ENCODE measurements at regions of chr12 and their contacts with region 1.

Region 1: DNA sequence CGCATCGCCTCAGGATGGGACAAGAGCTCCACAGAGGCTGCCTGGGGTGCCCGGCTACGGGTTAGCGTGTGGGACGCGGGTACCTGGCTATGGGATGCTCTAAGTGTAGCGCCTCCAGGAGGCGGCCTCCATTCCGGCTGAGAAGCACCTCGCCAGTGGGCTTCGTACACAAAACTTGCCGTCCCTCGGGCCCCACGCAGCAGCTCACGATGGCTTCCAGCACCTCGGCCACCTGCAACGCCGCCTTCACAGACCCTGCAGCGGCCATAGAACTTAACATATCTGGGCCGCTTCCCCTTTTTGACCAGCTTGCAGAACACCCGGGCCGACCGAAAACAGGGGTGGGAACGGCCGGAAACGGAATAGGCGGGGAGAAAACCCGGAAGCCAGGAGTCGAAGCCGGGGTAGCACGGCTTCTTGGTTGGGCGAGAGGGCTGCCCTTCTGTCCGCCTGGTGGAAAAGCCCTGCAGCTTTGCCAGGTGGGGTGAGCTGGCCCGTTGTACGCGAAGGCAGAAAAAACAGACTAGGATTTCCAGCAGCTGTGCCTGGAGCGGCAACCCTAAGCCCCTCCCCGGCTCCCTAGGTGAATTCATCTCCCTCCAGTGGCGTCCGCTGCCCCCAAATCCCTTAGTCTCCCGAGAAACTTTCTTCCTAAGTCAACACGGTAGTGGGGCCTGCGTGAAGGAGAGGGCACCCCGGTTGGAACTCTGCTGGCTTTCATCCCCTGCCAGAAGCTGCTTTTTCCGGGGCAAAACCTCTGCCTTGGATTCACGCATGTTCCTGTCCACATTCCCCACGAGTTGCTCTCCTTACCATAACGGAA is at the start of gene BBS10:
- DNase-seq: peak; percentile 81
- ATAC-seq: peak; percentile 95
- H3K4me3 Mint-ChIP-seq: peak within 1 kb of the TSS; percentile 93
- H3K27ac Mint-ChIP-seq: peak within 1 kb of the TSS; percentile 87
- H3K4me1 Mint-ChIP-seq: peaks cover 14% of the 10 kb centered on the region
- H3K27me3 Mint-ChIP-seq: no peaks in the 10 kb centered on the region
- total RNA-seq, gene BBS10: 5.8 to 7.1 TPM

Region 2: GRCh38 chr12:76083904-76084862 is 264.1 kb before region 1 on chr12 and contains the start of gene NAP1L1:
- POLR2A ChIA-PET with region 1: interaction called, 13 read pairs
- DNase-seq: peak; percentile 95
- ATAC-seq: peak; percentile 85
- H3K4me3 Mint-ChIP-seq: peak within 1 kb of the TSS; percentile 99
- H3K27ac Mint-ChIP-seq: peak within 1 kb of the TSS; percentile 99
- H3K4me1 Mint-ChIP-seq: peaks cover 35% of the 10 kb centered on the region
- H3K27me3 Mint-ChIP-seq: no peaks in the 10 kb centered on the region
- total RNA-seq, gene NAP1L1: 534 to 576 TPM

Region 3: GRCh38 chr12:76559400-76560085 is 211.3 kb after region 1 on chr12 and contains the start of gene OSBPL8:
- POLR2A ChIA-PET with region 1: interaction called, 14 read pairs
- DNase-seq: peak; percentile 97
- ATAC-seq: peak; percentile 75
- H3K4me3 Mint-ChIP-seq: peak within 1 kb of the TSS; percentile 93
- H3K27ac Mint-ChIP-seq: peak within 1 kb of the TSS; percentile 97
- H3K4me1 Mint-ChIP-seq: peaks cover 29% of the 10 kb centered on the region
- H3K27me3 Mint-ChIP-seq: no peaks in the 10 kb centered on the region
- total RNA-seq, gene OSBPL8: 101 TPM

Measured in activated naive CD8-positive, alpha-beta T cell treated with anti-CD3 and anti-CD28 coated beads, Interleukin-2, amount 10 ng/mL, durations not matched to agents 7 days and 5 days (primary cell).